Mammary epithelial cell (primary cell): ENCODE measurements at regions of chr19 and their contacts with region 1.

Region 1: DNA sequence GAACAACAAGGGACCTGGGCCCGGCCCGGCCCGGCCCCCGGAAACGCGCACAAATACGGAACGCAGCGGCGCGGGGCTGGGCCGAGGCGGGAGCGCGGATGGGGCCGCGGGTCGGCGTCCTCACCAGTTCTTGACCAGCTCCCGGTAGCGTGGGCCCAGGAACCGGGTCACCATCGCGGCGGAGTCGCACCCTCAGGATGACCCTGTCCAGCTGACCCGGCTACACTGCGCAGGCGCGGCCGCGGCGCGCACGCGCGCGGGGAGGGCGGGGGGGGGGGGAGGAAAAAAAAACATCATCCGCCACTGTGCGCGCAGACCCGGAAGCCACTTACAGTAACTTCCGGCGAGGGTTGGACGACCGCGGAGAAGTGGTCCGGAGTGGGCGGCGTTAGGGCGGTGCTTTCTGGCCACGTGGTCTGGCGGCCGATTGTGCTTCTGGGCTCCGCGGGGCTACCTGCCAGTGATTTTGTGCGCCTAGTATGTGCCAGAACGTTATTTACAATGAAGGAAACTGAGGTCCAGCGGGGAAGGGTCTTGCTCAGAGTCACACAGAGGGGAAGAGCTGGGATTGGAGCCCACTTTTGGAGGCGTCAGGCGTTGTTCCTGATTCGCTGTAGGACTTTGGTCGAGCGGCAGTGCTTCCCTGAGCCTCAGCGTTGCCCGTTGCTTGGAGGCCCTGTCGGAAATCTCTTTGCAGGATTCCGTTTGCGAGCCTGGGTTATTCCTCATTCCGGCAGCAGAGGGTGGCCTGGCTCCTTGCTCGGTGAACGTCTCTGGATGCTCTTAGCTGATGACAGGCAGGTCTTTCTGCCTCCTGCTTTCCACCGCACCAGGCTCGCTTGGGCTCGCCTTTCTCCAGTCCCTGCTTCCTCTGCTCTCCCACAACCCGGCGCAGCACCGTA is at the start of gene UQCR11:
- DNase-seq: peak; percentile 92
- H3K4me3 ChIP-seq: peak within 1 kb of the TSS; percentile 88 to 99 (median 88)
- H3K27ac ChIP-seq: peak within 1 kb of the TSS; percentile 68
- H3K4me1 ChIP-seq: peaks cover 5% of the 10 kb centered on the region
- H3K27me3 ChIP-seq: no peaks in the 10 kb centered on the region
- CTCF ChIP-seq: peak; percentile 44 to 72
- total RNA-seq, gene UQCR11: 28.3 to 250 TPM

Region 2: GRCh38 chr19:1551068-1552040 is 54.1 kb before region 1 on chr19:
- CTCF ChIA-PET with region 1: no interaction called
- dilution Hi-C with region 1: no loop called
- in situ Hi-C with region 1: no loop called
- intact Hi-C with region 1: loop called (anchors 1 kb)
- DNase-seq: no peak
- H3K4me3 ChIP-seq: no peak overlapping the region
- H3K27ac ChIP-seq: no peak overlapping the region
- H3K4me1 ChIP-seq: no peaks in the 10 kb centered on the region
- H3K27me3 ChIP-seq: no peaks in the 10 kb centered on the region
- CTCF ChIP-seq: no peak

Region 3: GRCh38 chr19:1672038-1672768 is 66.7 kb after region 1 on chr19:
- CTCF ChIA-PET with region 1: no interaction called
- dilution Hi-C with region 1: no loop called
- in situ Hi-C with region 1: no loop called
- intact Hi-C with region 1: loop called (anchors 1 kb)
- DNase-seq: no peak
- H3K4me3 ChIP-seq: peak overlapping the region in 2 of 3 experiments; percentile 6 to 49
- H3K27ac ChIP-seq: no peak overlapping the region
- H3K4me1 ChIP-seq: peaks cover 11% of the 10 kb centered on the region
- H3K27me3 ChIP-seq: peaks cover 8% of the 10 kb centered on the region
- CTCF ChIP-seq: peak; percentile 62 to 74

Region 4: GRCh38 chr19:1794424-1795172 is 189.1 kb after region 1 on chr19:
- CTCF ChIA-PET with region 1: no interaction called
- dilution Hi-C with region 1: no loop called
- in situ Hi-C with region 1: no loop called
- intact Hi-C with region 1: loop called (anchors 1 kb)
- DNase-seq: no peak
- H3K4me3 ChIP-seq: no peak overlapping the region
- H3K27ac ChIP-seq: no peak overlapping the region
- H3K4me1 ChIP-seq: peaks cover 5% of the 10 kb centered on the region
- H3K27me3 ChIP-seq: no peaks in the 10 kb centered on the region
- CTCF ChIP-seq: no peak

Region 5: DNA sequence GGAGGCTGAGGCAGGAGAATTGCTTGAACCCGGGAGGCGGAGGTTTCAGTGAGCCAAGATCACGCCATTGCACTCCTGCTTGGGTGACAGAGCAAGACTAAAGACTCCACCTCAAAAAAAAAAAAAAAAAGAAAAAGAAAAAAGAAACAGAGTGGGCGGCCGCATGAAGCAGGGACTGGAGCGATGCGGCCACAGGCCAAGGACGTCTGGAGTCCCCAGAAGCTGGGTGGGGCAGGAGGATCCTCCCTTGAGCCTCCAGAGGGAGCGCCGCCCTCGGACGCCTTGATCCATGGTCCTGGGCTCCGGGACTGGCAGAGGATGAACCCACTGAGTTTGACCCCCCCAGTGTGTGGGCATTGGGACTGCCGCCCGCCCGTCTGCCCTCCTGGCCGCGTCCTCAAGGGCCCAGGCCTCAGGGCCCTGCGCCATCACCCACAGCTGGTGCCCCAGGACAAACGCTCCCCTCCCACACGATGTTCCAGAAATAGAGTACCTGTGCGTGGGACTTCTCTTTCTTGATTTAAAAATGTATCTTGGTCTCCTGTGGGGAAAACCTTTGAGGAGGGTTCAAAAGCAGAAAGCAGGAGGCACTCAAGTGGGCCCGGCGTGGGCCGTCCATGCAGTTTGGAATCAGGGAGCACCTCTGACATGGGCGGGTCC is 394.5 kb after region 1 on chr19:
- CTCF ChIA-PET with region 1: no interaction called
- dilution Hi-C with region 1: no loop called
- in situ Hi-C with region 1: no loop called
- intact Hi-C with region 1: no loop called
- DNase-seq: no peak
- H3K4me3 ChIP-seq: no peak overlapping the region
- H3K27ac ChIP-seq: no peak overlapping the region
- H3K4me1 ChIP-seq: no peaks in the 10 kb centered on the region
- H3K27me3 ChIP-seq: no peaks in the 10 kb centered on the region
- CTCF ChIP-seq: no peak